ENCODE measurements at regions of chr19 and their contacts with region 1.

Region 1: DNA sequence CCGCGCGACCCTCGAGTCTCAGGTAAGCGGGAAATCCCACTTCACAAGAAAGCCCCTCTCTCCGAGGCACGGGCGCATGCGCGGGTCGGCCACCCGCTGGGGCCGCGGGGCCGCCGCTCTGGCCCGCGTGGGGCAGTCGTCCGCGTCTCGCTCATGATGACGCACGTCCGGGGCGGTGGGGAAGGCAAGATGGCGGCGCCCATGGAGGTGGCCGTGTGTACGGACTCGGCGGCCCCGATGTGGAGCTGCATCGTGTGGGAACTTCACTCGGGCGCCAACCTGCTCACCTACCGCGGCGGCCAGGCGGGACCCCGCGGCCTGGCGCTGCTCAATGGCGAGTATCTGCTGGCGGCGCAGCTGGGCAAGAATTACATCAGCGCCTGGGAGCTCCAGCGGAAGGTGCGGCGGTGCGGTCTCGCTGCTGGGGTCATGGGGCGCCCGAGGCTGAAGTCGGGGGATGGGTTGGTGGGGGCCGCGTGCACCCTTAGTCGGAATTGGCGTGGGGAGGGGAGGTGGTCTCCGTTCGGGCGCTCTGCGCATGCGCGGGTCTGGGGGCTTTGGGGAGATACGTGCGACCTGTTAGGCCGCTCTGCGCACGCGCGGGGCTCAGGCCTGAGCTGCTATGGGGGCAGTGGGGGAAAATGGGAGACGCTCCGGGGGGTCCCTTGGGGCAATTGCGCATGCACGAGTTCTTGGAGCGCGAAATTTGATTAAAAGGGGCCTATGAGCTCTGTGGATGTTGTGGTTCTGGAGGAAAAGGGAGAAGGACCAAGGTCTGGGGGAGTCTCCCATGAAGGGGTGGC is at the start of gene WDR18:
- DNase-seq: peak; percentile 87 to 98
- H3K4me3 ChIP-seq: peak within 1 kb of the TSS; percentile 97
- CTCF ChIP-seq: no peak
- POLR2A ChIP-seq: no peak
- total RNA-seq, gene WDR18: 29.0 to 66.9 (median 39.9) TPM

Region 2: GRCh38 chr19:850221-850978 is 134.0 kb before region 1 on chr19:
- intact Hi-C with region 1: loop called (anchors 10 kb)
- DNase-seq: peak; percentile 86 to 98
- H3K4me3 ChIP-seq: no peak overlapping the region
- CTCF ChIP-seq: no peak
- POLR2A ChIP-seq: no peak

Region 3: GRCh38 chr19:925526-926322 is 58.6 kb before region 1 on chr19 and contains the start of gene ARID3A:
- intact Hi-C with region 1: loop called (anchors 1 kb)
- DNase-seq: peak; percentile 73 to 97
- H3K4me3 ChIP-seq: peak within 1 kb of the TSS; percentile 83
- CTCF ChIP-seq: no peak
- POLR2A ChIP-seq: no peak
- total RNA-seq, gene ARID3A: 1.8 to 9.4 (median 5.6) TPM

Region 4: GRCh38 chr19:940591-941291 is 43.6 kb before region 1 on chr19:
- intact Hi-C with region 1: no loop called
- DNase-seq: peak; percentile 76 to 95
- H3K4me3 ChIP-seq: no peak overlapping the region
- CTCF ChIP-seq: no peak
- POLR2A ChIP-seq: no peak

Measured in lower leg skin (tissue), 4 donors.